ENCODE measurements at regions of chr9 and their contacts with region 1.

Region 1: GRCh38 chr9:111094433-111094924 is 56.2 kb upstream of the LPAR1 start:
- DNase-seq: peak in 3 of 5 donors; percentile 16 to 45 (median 32)
- ATAC-seq: peak in 3 of 4 donors; percentile 75 to 92 (median 82)
- H3K4me3 ChIP-seq: no peak overlapping the region
- H3K27ac ChIP-seq: peak overlapping the region in 6 of 12 donors; percentile 0 to 69 (median 42)
- H3K4me1 ChIP-seq: peaks cover 0 to 11% (median 0%) of the 10 kb centered on the region in 12 donors
- H3K27me3 ChIP-seq: no peaks in the 10 kb centered on the region
- CTCF ChIP-seq: no peak
- POLR2A ChIP-seq: no peak

Region 2: DNA sequence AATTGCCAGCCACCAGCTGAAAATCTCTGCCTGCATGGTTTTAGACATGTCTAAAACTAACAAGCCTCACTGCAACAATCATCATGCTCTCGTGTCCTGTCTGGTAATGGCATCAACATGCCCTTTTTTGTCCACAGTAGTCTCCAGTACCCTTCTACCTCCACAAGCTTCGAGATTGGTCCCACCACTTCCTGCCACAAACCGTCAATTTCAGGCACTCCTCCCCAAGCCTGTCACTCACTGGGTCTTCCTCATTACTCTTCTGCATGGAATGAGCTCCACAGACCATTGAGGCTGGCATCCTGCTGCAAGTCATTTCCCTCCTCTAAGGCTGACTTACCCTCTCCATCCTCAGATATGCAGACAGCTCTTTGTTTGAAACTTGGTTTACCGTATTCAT is 65.2 kb before region 1 on chr9:
- intact Hi-C with region 1: loop called in 1 of 10 experiments (anchors 10 kb)
- DNase-seq: no peak
- ATAC-seq: no peak
- H3K4me3 ChIP-seq: no peak overlapping the region
- H3K27ac ChIP-seq: no peak overlapping the region
- H3K4me1 ChIP-seq: peaks cover 0 to 11% (median 0%) of the 10 kb centered on the region in 12 donors
- H3K27me3 ChIP-seq: peaks cover 0 to 23% (median 2%) of the 10 kb centered on the region in 9 donors
- CTCF ChIP-seq: no peak
- POLR2A ChIP-seq: no peak